Right ventricle myocardium superior (tissue), 1 donor: ENCODE measurements at regions of chr7 and their contacts with region 1.

Region 1: GRCh38 chr7:23181684-23182553 is at the start of gene NUP42:
- DNase-seq: peak; percentile 96
- ATAC-seq: peak; percentile 97
- total RNA-seq, gene NUP42: 19.7 TPM

Region 2: DNA sequence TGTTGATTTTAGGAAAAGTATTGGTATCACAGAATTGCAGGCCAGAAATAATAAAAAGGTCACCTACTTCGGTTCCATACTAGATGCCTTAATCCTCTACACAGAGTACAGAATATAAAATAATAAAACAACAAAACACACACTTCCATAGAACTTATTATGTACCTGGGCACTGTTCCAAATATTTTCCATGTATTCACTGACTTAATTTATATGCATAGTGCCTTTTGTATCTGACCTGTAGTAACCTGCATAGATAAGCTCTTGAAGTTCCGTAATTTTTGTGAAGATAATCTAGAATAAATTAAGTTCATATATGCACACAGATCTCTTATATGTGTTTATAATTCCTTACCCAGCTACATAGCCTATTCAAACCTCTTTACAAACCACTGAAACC is 903.3 kb before region 1 on chr7:
- intact Hi-C with region 1: no loop called
- DNase-seq: no peak
- ATAC-seq: no peak

Region 3: DNA sequence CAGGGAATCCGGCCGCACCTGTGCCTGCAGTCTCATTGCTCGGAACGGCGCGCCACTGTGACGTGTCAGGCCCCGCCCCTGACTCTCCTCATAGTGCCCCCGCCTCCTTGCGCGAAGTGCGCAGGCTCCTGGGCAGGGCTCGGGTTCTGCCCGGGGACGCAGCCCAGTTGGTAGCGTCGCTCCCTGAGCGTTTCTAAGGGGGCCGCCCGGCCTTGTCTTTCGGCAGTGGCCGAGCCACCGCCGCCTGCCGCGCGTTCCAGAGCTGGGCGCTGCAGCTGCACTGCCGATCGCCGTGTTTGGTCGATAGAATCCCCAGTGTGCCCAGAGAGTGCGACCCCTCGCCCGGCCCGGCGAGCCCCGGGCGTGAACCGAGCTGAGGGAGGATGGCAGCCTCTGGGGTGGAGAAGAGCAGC is 76.3 kb before region 1 on chr7 and contains the start of gene KLHL7:
- intact Hi-C with region 1: loop called (anchors 5 kb)
- DNase-seq: peak; percentile 99
- ATAC-seq: peak; percentile 97
- total RNA-seq, gene KLHL7: 167 TPM